ENCODE measurements at regions of chr16 and their contacts with region 1.

Region 1: GRCh38 chr16:55760310-55761001 is 72.4 kb downstream of the CES1 start:
- DNase-seq: no peak
- ATAC-seq: no peak
- H3K4me3 ChIP-seq: no peak overlapping the region
- H3K27ac ChIP-seq: no peak overlapping the region
- H3K4me1 ChIP-seq: no peaks in the 10 kb centered on the region
- H3K27me3 ChIP-seq: no peaks in the 10 kb centered on the region
- CTCF ChIP-seq: no peak
- EP300 ChIP-seq: no peak
- POLR2A ChIP-seq: no peak
- RAD21 ChIP-seq: no peak

Region 2: DNA sequence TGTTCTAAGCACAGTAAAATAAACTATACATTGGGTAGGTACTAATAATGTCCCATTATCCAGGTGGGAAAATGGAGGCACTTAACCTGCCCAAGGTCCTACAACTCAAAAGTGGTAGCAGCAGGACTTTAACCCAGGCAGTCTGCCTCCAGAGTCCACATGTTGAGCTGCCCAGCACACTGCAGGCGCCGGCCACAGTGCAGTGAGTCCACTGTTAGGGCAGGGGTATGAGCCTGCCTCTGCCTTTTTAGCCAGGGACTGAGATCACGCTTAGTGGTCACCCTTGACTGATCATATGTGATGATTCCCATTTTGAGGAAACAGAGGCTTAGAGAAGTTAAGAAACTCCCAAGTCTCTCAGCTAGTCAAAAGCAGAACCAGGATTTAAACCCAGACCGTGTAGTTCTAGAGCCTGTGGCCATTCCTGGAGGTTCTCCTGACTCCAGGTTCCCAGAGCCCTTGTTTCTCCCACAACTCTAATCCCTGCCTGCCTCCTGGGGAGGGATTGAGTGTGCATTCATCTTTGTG is 64.1 kb after region 1 on chr16:
- CTCF ChIA-PET with region 1: no interaction called
- POLR2A ChIA-PET with region 1: no interaction called
- RAD21 ChIA-PET with region 1: no interaction called
- SMC1A ChIA-PET with region 1: no interaction called
- in situ Hi-C with region 1: loop called (anchors 10 kb)
- intact Hi-C with region 1: loop called (anchors 1 kb)
- DNase-seq: no peak
- ATAC-seq: no peak
- H3K4me3 ChIP-seq: no peak overlapping the region
- H3K27ac ChIP-seq: no peak overlapping the region
- H3K4me1 ChIP-seq: no peaks in the 10 kb centered on the region
- H3K27me3 ChIP-seq: no peaks in the 10 kb centered on the region
- CTCF ChIP-seq: no peak
- EP300 ChIP-seq: no peak
- POLR2A ChIP-seq: no peak
- RAD21 ChIP-seq: no peak

Region 3: DNA sequence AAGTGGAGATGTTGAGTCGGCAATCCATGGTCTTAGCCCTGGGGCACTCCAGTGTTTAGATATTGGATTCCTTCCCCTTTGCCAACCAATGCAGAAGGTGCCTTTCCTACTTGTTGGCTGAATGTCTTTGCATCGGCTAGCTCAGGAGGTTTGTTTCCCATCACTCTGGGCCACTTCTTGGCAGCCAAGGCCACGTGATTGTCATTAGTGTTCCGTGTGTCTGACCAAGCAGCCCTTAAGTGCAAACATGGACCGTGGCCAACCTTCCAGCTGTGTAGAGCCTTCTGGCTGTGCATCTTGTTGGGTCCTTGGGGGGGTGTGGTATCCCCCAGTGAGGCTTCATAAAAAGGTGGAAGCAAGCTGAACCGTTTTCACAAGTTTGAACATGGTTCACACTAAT is 496.8 kb after region 1 on chr16:
- CTCF ChIA-PET with region 1: no interaction called
- POLR2A ChIA-PET with region 1: no interaction called
- RAD21 ChIA-PET with region 1: no interaction called
- SMC1A ChIA-PET with region 1: no interaction called
- in situ Hi-C with region 1: no loop called
- intact Hi-C with region 1: no loop called
- DNase-seq: no peak
- ATAC-seq: no peak
- H3K4me3 ChIP-seq: no peak overlapping the region
- H3K27ac ChIP-seq: no peak overlapping the region
- H3K4me1 ChIP-seq: no peaks in the 10 kb centered on the region
- H3K27me3 ChIP-seq: peaks cover 6 to 11% of the 10 kb centered on the region in 2 experiments; a peak in 3 of 4 replicates
- CTCF ChIP-seq: no peak
- EP300 ChIP-seq: no peak
- POLR2A ChIP-seq: no peak
- RAD21 ChIP-seq: no peak